Posterior vena cava (tissue), 2 donors: ENCODE measurements at regions of chr13 and their contacts with region 1.

Region 1: GRCh38 chr13:24220086-24220703 is 59.7 kb downstream of the SPATA13 start:
- DNase-seq: no peak

Region 2: DNA sequence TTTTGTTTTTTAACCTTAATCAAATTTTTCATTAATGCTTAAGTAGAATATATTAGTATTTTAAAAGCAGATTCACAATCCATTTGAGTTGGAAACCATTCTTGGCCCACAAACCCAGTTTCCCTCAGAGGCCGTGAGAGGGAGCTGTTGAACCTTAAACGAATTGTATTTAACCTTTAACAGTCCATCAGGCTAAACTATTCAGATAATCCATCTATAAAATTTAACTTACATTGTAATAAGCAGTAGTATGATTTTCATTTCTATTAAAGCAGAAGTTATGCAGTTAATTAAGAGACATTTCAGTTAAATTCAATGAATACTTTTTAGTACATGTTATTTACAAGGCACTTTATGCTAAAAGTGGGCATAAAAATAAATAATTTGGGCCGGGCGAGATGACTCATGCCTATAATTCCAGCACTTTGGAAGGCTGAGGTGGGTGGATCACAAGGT is 199.8 kb before region 1 on chr13:
- intact Hi-C with region 1: loop called (anchors 2 to 5 kb)
- DNase-seq: no peak

Region 3: GRCh38 chr13:24254146-24254841 is 34.1 kb after region 1 on chr13:
- intact Hi-C with region 1: no loop called
- DNase-seq: no peak